WTC11 (cell line): ENCODE measurements at regions of chr1 and their contacts with region 1.

Region 1: GRCh38 chr1:50774759-50775351 is 185.2 kb downstream of the FAF1 start:
- DNase-seq: no peak
- ATAC-seq: peak; percentile 34; the same call in 1 of the 2 replicates
- H3K4me3 Mint-ChIP-seq: no peak overlapping the region
- H3K27ac Mint-ChIP-seq: no peak overlapping the region
- H3K4me1 Mint-ChIP-seq: no peaks in the 10 kb centered on the region
- H3K27me3 Mint-ChIP-seq: no peaks in the 10 kb centered on the region
- CTCF ChIP-seq: peak; percentile 44; the same call in 1 of the 2 replicates

Region 2: DNA sequence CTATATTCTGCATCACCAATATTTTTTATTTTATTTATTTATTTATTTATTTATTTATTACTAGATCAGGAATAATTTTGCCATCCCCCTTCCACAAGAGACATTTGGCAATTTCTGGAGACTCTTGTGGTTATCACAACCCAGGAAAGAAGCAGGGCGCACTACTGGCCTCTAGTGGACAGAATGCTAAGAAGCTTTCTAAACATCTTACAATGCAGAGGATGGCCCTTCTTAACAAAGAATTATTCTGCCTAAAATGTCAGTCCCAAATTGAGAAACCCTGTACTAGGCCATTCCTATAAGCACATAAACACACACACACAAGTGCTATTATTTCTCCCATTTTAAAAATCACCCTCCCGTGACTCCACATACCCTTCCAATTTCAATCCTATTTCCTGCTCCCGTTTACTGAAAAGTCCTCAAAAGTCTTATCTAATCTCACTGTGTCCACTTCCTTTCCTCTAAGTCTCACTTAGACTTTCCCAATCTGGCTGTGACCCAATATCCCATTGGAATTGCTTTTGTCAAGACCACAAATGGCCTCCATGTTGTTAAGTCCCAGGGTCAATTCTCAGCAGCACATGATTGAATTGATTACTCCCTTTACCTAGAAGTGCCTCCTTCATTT is 417.5 kb after region 1 on chr1:
- CTCF ChIA-PET with region 1: interaction called, 22 read pairs
- POLR2A ChIA-PET with region 1: no interaction called
- DNase-seq: peak; percentile 63
- ATAC-seq: peak; percentile 75
- H3K4me3 Mint-ChIP-seq: no peak overlapping the region
- H3K27ac Mint-ChIP-seq: no peak overlapping the region
- H3K4me1 Mint-ChIP-seq: no peaks in the 10 kb centered on the region
- H3K27me3 Mint-ChIP-seq: no peaks in the 10 kb centered on the region; the same call in 1 of the 2 replicates
- CTCF ChIP-seq: peak; percentile 59